HepG2 (cell line): ENCODE measurements at regions of chr20 and their contacts with region 1.

Region 1: GRCh38 chr20:13644010-13644409 is 5.3 kb upstream of the TASP1 start:
- DNase-seq: no peak
- ATAC-seq: no peak
- H3K4me3 ChIP-seq: no peak overlapping the region
- H3K27ac ChIP-seq: no peak overlapping the region
- H3K4me1 ChIP-seq: peaks cover 9% of the 10 kb centered on the region; the same call in 1 of the 2 replicates
- H3K27me3 ChIP-seq: peaks cover 0 to 2% of the 10 kb centered on the region in 2 experiments; a peak in 2 of 5 replicates
- CTCF ChIP-seq: no peak
- EP300 ChIP-seq: no peak
- POLR2A ChIP-seq: no peak
- RAD21 ChIP-seq: no peak

Region 2: DNA sequence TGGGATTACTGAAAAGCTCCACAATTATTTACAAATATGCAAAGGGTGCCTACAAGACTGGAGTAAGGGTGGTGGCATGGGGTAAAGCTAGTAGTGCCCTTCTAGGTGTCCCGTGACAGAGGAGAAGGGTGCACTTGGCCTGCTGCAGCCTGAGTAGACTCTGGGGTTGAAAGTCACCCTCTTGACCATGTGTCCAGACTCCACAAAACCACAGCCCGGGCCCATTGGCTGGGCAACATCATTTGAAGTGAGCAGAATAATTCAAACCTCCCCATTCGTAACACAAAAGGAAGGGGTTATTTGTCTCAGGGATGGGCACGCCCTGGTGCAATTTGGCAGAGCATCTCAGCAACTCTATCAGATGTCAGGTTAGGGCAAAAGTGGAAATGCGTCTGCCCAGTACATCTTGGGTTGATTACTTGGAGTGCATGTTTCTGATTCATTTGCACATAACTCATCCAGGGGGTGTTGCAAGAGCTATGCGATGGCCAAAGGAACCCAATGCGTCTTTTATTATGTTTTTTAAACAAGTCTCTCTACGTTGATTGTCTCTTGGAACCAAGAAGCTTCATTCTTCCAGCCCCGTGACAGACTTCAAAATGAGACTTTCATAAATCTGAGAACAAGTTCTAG is 366.2 kb before region 1 on chr20:
- CTCF ChIA-PET with region 1: no interaction called
- POLR2A ChIA-PET with region 1: no interaction called
- in situ Hi-C with region 1: no loop called
- intact Hi-C with region 1: no loop called
- DNase-seq: no peak
- ATAC-seq: no peak
- H3K4me3 ChIP-seq: no peak overlapping the region
- H3K27ac ChIP-seq: no peak overlapping the region
- H3K4me1 ChIP-seq: no peaks in the 10 kb centered on the region
- H3K27me3 ChIP-seq: no peaks in the 10 kb centered on the region; a peak in 1 of 5 replicates
- CTCF ChIP-seq: no peak
- EP300 ChIP-seq: no peak
- POLR2A ChIP-seq: no peak
- RAD21 ChIP-seq: no peak

Region 3: GRCh38 chr20:13684566-13685222 is 40.7 kb after region 1 on chr20:
- CTCF ChIA-PET with region 1: no interaction called
- POLR2A ChIA-PET with region 1: no interaction called
- in situ Hi-C with region 1: no loop called
- intact Hi-C with region 1: loop called (anchors 5 kb)
- DNase-seq: no peak
- ATAC-seq: no peak
- H3K4me3 ChIP-seq: no peak overlapping the region
- H3K27ac ChIP-seq: no peak overlapping the region
- H3K4me1 ChIP-seq: peaks cover 30% of the 10 kb centered on the region
- H3K27me3 ChIP-seq: no peaks in the 10 kb centered on the region
- CTCF ChIP-seq: no peak
- EP300 ChIP-seq: no peak
- POLR2A ChIP-seq: no peak
- RAD21 ChIP-seq: no peak